WTC11 (cell line): ENCODE measurements at regions of chr11 and their contacts with region 1.

Region 1: DNA sequence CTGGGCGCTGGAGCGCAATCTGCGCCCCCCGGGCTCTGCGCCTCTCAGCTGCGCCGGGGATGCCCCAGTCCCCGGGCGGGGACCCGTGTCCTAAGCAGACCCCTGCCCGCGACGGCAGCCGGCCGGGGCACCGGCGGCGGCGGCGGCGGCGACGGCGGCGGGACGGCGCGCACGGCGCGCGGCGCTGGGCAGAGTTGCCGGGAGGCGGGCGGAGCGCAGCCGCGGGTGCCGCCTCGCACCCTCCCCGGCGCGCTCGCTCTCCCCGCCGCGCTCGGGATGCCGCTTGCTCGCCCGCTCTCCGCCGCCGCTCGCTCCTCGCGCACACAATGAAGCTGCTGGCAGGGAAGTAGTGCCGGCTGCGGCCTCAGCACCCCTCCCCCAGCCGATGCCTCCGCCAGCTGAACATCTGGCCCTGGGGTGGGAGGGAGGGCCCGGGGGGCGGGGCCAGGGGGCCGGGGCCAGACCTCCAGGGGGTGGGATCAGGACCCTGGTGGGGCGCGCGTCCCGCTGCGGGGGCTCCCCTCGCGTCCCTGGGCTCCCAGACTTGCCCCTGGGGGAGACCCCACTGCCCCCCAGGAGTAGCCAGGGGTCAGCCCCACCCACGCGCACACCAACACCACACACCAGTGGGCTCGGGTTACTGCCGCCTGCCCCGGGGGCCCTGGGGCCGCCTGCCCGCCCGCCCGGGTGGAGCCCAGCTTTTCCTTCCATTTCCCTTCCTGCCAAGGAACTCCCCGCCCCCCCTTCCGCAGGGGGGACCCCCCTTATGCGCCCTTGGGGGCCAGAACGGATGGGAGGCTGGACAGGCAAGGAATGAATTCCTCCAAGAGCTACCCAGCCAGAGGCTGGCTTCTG is at the start of gene RCOR2:
- DNase-seq: peak; percentile 81
- ATAC-seq: no peak
- H3K4me3 Mint-ChIP-seq: peak within 1 kb of the TSS; percentile 90
- H3K27ac Mint-ChIP-seq: peak within 1 kb of the TSS; percentile 92
- H3K4me1 Mint-ChIP-seq: peaks cover 31% of the 10 kb centered on the region
- H3K27me3 Mint-ChIP-seq: no peaks in the 10 kb centered on the region; the same call in 1 of the 2 replicates
- CTCF ChIP-seq: no peak
- total RNA-seq, gene RCOR2: 77.4 to 98.3 TPM (median 92.0 TPM) in 3 replicates

Region 2: GRCh38 chr11:63762654-63763495 is 154.2 kb before region 1 on chr11:
- CTCF ChIA-PET with region 1: interaction called, 11 read pairs
- POLR2A ChIA-PET with region 1: interaction called, 12 read pairs
- DNase-seq: peak; percentile 64
- ATAC-seq: peak; percentile 2; the same call in 1 of the 2 replicates
- H3K4me3 Mint-ChIP-seq: peak overlapping the region; percentile 99
- H3K27ac Mint-ChIP-seq: no peak overlapping the region
- H3K4me1 Mint-ChIP-seq: peaks cover 51% of the 10 kb centered on the region
- H3K27me3 Mint-ChIP-seq: no peaks in the 10 kb centered on the region
- CTCF ChIP-seq: no peak

Region 3: DNA sequence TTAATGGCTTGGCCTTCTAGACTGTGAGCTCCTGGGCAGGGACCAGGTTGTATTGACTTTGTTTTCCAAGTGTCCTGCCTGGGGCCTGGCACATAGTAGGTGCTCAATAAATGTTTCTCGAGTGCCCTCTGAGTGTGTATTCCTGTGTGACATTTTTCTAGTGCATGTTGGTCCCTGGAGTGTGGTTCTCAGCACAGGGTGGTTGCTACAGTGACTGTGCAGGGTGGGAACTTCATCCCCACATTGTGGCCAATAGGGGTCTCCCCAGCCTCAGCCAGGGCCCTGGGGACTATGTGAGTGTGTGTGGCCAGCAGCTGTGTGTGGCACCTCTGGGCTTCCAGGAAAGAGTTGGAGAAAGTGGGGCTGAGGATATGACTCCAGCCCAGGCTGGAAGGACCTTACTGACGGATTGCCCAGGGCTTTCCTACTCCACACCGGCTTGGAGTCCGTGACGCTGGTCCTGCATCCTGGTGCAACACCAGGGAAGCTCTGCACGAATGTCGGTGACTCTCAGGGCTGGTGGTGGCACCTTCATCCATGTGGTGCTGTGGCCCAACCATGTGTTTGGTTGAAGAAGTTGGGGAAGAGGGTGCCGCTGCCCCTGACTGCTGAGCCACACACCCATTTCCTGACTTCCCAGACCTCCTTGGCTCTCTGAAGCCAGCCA is 87.1 kb before region 1 on chr11:
- CTCF ChIA-PET with region 1: interaction called, 12 read pairs
- POLR2A ChIA-PET with region 1: interaction called, 3 read pairs
- DNase-seq: peak; percentile 62
- ATAC-seq: peak; percentile 87
- H3K4me3 Mint-ChIP-seq: no peak overlapping the region
- H3K27ac Mint-ChIP-seq: peak overlapping the region; percentile 47; the same call in 1 of the 2 replicates
- H3K4me1 Mint-ChIP-seq: peaks cover 30% of the 10 kb centered on the region
- H3K27me3 Mint-ChIP-seq: no peaks in the 10 kb centered on the region; the same call in 1 of the 2 replicates
- CTCF ChIP-seq: no peak

Region 4: DNA sequence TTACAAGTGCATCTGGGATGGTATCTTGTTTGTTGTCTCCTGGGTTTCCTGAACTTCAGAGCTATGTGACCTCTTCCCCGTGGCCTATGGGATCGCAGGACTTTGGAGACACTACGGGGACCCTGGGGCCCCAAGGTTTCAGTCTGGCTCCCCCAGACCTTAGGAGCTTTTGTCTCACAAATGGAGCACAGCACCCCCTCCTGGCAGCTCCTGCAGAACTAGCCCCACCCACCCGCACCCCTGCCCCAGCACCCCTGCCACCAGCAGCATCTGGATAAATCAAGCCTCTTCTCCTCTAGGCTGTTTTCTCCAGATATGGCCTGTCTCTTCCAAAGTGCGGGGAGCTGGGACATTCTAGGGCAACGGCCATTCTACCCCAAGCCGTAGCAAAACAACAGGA is 10.5 kb before region 1 on chr11:
- CTCF ChIA-PET with region 1: interaction called, 48 read pairs
- POLR2A ChIA-PET with region 1: interaction called, 9 read pairs
- DNase-seq: peak; percentile 62
- ATAC-seq: no peak
- H3K4me3 Mint-ChIP-seq: no peak overlapping the region
- H3K27ac Mint-ChIP-seq: peak overlapping the region; percentile 93
- H3K4me1 Mint-ChIP-seq: peaks cover 48% of the 10 kb centered on the region
- H3K27me3 Mint-ChIP-seq: no peaks in the 10 kb centered on the region
- CTCF ChIP-seq: peak; percentile 35; the same call in 1 of the 2 replicates

Region 5: GRCh38 chr11:63938479-63939396 is 21.7 kb after region 1 on chr11 and contains the start of gene NAA40:
- CTCF ChIA-PET with region 1: interaction called, 103 read pairs
- POLR2A ChIA-PET with region 1: interaction called, 24 read pairs
- DNase-seq: peak; percentile 95
- ATAC-seq: peak; percentile 88
- H3K4me3 Mint-ChIP-seq: peak within 1 kb of the TSS; percentile 95
- H3K27ac Mint-ChIP-seq: peak within 1 kb of the TSS; percentile 99
- H3K4me1 Mint-ChIP-seq: peaks cover 19% of the 10 kb centered on the region
- H3K27me3 Mint-ChIP-seq: peaks cover 5% of the 10 kb centered on the region; the same call in 1 of the 2 replicates
- CTCF ChIP-seq: no peak
- total RNA-seq, gene NAA40: 31.1 to 32.7 TPM (median 31.8 TPM) in 3 replicates

Region 6: DNA sequence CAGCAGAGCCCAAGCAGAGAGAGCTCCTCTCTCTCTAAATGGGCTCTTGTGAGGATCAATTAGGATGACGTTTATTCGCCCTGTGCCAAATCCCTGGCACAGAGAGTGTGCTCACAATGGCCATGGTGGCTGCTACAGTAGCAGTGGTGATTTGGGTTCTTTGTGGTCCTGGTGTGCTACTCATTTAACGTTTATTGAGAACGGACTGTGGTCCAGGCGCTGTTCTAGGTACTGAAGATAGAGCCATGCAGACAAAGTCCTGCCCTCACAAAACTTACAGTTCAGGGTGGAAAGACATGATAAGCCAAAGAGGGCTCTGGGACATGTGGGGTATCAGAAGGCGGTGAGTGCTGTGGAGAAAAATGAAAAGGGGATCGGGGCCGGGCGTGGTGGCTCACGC is 74.5 kb after region 1 on chr11:
- CTCF ChIA-PET with region 1: no interaction called
- POLR2A ChIA-PET with region 1: no interaction called
- DNase-seq: no peak
- ATAC-seq: no peak
- H3K4me3 Mint-ChIP-seq: no peak overlapping the region
- H3K27ac Mint-ChIP-seq: 0 out of 2 replicates have a peak overlapping the region, but pooled peaks have one; percentile 9
- H3K4me1 Mint-ChIP-seq: peaks cover 13% of the 10 kb centered on the region
- H3K27me3 Mint-ChIP-seq: no peaks in the 10 kb centered on the region
- CTCF ChIP-seq: no peak